Breast epithelium (tissue), 4 donors: ENCODE measurements at regions of chr11 and their contacts with region 1.

Region 1: GRCh38 chr11:11806586-11806985 is 35.2 kb upstream of the USP47 start:
- DNase-seq: no peak
- H3K4me3 ChIP-seq: no peak overlapping the region
- H3K27ac ChIP-seq: no peak overlapping the region
- H3K4me1 ChIP-seq: no peaks in the 10 kb centered on the region
- H3K27me3 ChIP-seq: no peaks in the 10 kb centered on the region
- CTCF ChIP-seq: no peak
- POLR2A ChIP-seq: no peak

Region 2: GRCh38 chr11:11770296-11770695 is 36.3 kb before region 1 on chr11:
- intact Hi-C with region 1: no loop called
- DNase-seq: no peak
- H3K4me3 ChIP-seq: no peak overlapping the region
- H3K27ac ChIP-seq: no peak overlapping the region
- H3K4me1 ChIP-seq: no peaks in the 10 kb centered on the region
- H3K27me3 ChIP-seq: no peaks in the 10 kb centered on the region
- CTCF ChIP-seq: no peak
- POLR2A ChIP-seq: no peak

Region 3: GRCh38 chr11:12159351-12160099 is 352.9 kb after region 1 on chr11:
- intact Hi-C with region 1: loop called (anchors 10 kb)
- DNase-seq: no peak
- H3K4me3 ChIP-seq: no peak overlapping the region
- H3K27ac ChIP-seq: peak overlapping the region; percentile 41
- H3K4me1 ChIP-seq: peaks cover 0 to 5% of the 10 kb centered on the region in 2 donors
- H3K27me3 ChIP-seq: no peaks in the 10 kb centered on the region
- CTCF ChIP-seq: no peak
- POLR2A ChIP-seq: no peak

Region 4: GRCh38 chr11:12539572-12539971 is 733.0 kb after region 1 on chr11:
- intact Hi-C with region 1: loop called (anchors 10 kb)
- DNase-seq: peak in 1 of 2 donors; percentile 2
- H3K4me3 ChIP-seq: no peak overlapping the region
- H3K27ac ChIP-seq: peak overlapping the region; percentile 8 to 72
- H3K4me1 ChIP-seq: peaks cover 6 to 8% of the 10 kb centered on the region in 2 donors
- H3K27me3 ChIP-seq: no peaks in the 10 kb centered on the region
- CTCF ChIP-seq: no peak
- POLR2A ChIP-seq: no peak